ENCODE measurements at regions of chr14 and their contacts with region 1.

Region 1: DNA sequence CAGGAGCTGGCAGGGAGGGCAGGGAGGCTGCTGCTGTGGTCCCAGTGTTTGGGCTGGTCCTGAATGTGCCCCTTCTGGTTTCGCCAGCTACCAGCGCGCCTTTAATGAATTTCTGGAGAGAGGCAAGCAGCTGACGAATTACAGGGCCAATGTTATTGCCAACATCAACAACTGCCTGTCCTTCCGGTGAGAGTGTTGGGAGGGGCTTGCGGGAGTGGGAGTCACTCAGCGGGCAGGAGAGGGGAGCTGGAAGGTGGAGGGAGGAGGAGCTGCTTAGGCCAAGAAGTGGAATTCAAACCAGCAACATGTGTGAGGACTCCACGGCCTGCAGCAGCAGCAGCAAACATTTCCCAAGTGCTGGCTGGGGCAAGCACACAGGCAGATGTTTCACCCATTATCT is 7.7 kb downstream of the TNFAIP2 start:
- DNase-seq: peak; percentile 89 to 98
- H3K4me3 ChIP-seq: no peak overlapping the region
- H3K27ac ChIP-seq: peak overlapping the region; percentile 86
- H3K4me1 ChIP-seq: peaks cover 89% of the 10 kb centered on the region
- H3K27me3 ChIP-seq: no peaks in the 10 kb centered on the region
- CTCF ChIP-seq: no peak

Region 2: DNA sequence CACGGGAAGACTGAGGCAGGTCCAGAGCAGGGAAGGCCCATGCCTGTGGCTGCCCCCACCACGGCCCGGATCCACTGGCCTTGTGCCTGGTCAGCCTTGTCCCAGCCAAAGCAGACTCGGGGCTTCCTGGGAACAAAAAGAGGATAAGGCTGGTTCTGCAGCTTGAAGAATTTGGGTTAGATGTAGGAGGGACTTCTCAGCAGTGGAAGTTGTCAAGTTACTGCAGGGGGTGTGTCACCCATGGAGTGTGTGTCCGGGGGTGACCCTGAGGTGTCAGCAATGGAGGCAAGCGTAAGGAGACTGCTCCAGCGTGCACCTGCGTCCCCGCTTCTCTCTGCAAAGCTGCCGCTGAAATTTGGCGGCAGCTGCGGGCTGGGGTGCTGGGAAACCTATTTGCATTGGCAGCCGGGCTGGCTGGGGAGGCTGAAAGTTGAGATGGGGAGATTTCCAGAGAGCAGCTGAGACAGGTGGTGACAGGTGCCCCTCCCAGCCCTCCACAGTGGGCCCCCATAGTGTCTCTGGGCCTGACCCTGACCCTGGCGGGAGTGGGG is 20.2 kb before region 1 on chr14:
- CTCF ChIA-PET with region 1: interaction called, 43 read pairs
- POLR2A ChIA-PET with region 1: interaction called, 6 read pairs
- intact Hi-C with region 1: loop called (anchors 1 kb)
- DNase-seq: peak; percentile 93
- H3K4me3 ChIP-seq: peak overlapping the region; percentile 49; the same call in 1 of the 2 replicates
- H3K27ac ChIP-seq: peak overlapping the region; percentile 90
- H3K4me1 ChIP-seq: peaks cover 68% of the 10 kb centered on the region
- H3K27me3 ChIP-seq: no peaks in the 10 kb centered on the region
- CTCF ChIP-seq: no peak

Region 3: DNA sequence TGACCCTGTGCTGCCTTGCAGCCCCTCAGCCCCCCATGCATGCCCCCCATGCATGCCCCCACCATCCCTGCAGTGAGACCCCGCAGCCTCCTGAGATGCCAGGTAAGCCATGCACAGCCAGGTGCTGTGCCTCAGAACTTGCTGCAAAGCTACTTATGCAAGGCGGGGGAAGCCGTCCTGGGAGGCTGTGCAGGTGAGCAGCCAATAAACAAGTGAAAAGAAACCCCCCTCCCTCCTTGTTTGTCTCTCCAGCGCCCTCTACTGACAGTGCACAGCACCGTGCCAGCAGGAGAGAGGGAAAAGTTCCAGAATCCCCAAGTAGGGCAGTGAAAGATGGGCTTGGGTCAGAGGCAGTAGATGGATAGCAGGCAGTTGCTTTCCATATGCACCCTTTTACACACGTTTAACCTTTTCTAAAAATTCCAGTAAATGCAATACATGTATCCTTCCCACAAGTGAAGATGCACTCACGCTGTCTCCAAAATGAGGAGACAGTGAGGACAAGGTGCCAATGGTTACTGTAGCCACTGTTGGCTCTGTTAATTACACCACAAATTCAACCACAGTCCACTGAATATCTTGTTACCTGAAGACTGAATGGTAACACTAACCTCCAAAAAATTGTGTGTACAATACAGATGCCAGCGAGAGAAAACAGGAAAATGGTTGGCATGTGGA is 10.3 kb after region 1 on chr14:
- CTCF ChIA-PET with region 1: interaction called, 6 read pairs
- POLR2A ChIA-PET with region 1: interaction called, 10 read pairs
- intact Hi-C with region 1: loop called (anchors 1 kb)
- DNase-seq: peak; percentile 78 to 84
- H3K4me3 ChIP-seq: no peak overlapping the region
- H3K27ac ChIP-seq: 0 out of 2 replicates have a peak overlapping the region, but pooled peaks have one; percentile 30
- H3K4me1 ChIP-seq: peaks cover 59% of the 10 kb centered on the region
- H3K27me3 ChIP-seq: no peaks in the 10 kb centered on the region
- CTCF ChIP-seq: peak; percentile 99

Region 4: DNA sequence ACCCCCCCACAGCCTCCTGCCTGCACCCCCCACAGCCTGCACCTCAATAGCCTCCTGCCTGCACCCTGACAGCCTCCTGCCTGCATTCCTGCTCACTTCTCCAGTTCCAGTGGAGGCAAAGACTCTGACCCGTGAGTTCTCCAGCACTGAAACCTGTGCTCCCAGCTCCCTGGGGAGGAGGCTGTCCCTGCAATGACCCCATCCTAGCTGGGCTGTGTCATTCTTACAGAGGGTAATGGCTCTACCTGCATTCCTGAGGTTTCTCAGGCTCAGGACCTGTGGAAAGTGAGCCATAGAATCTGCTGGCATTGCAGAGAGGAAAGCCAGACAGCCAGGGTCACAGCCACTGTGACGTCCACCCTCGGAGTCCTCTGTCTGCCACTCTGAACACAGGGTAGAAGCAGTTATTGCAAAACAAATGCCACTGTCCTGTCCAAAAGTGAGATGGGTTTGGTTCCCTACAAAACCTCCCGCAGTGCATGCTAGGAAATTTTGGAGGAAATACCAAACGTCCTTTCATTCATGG is 30.0 kb after region 1 on chr14:
- CTCF ChIA-PET with region 1: interaction called, 4 read pairs
- POLR2A ChIA-PET with region 1: interaction called, 16 read pairs
- intact Hi-C with region 1: loop called (anchors 2 kb)
- DNase-seq: peak; percentile 95 to 100
- H3K4me3 ChIP-seq: no peak overlapping the region
- H3K27ac ChIP-seq: peak overlapping the region; percentile 89
- H3K4me1 ChIP-seq: peaks cover 68% of the 10 kb centered on the region
- H3K27me3 ChIP-seq: no peaks in the 10 kb centered on the region
- CTCF ChIP-seq: no peak

Region 5: DNA sequence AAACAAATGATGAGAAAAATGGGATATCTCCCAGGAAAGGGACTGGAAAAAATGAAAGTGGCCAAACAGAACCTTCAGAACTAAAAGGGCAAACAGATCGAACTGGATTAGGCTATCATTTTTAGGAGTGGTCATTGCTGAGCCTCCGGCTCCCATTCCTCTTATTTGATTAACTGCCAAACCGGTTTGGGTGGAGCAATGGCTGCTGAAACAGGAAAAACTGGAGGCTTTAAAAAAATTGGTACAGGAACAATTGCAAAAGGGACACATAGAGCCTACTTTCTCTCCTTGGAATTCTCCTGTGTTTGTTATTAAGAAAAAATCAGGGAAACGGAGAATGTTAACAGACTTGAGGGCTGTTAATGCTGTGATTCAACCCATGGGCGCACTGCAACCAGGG is 42.0 kb after region 1 on chr14:
- CTCF ChIA-PET with region 1: no interaction called
- POLR2A ChIA-PET with region 1: no interaction called
- intact Hi-C with region 1: loop called (anchors 1 kb)
- DNase-seq: peak; percentile 67 to 94
- H3K4me3 ChIP-seq: peak overlapping the region; percentile 15; the same call in 1 of the 2 replicates
- H3K27ac ChIP-seq: peak overlapping the region; percentile 65
- H3K4me1 ChIP-seq: peaks cover 34% of the 10 kb centered on the region
- H3K27me3 ChIP-seq: no peaks in the 10 kb centered on the region
- CTCF ChIP-seq: no peak

Region 6: GRCh38 chr14:103185051-103185992 is 54.4 kb after region 1 on chr14:
- CTCF ChIA-PET with region 1: interaction called, 3 read pairs
- POLR2A ChIA-PET with region 1: no interaction called
- intact Hi-C with region 1: loop called (anchors 1 kb)
- DNase-seq: peak; percentile 49 to 96
- H3K4me3 ChIP-seq: peak overlapping the region; percentile 14; the same call in 1 of the 2 replicates
- H3K27ac ChIP-seq: peak overlapping the region; percentile 92
- H3K4me1 ChIP-seq: peaks cover 37% of the 10 kb centered on the region
- H3K27me3 ChIP-seq: no peaks in the 10 kb centered on the region
- CTCF ChIP-seq: peak; percentile 100

Region 7: DNA sequence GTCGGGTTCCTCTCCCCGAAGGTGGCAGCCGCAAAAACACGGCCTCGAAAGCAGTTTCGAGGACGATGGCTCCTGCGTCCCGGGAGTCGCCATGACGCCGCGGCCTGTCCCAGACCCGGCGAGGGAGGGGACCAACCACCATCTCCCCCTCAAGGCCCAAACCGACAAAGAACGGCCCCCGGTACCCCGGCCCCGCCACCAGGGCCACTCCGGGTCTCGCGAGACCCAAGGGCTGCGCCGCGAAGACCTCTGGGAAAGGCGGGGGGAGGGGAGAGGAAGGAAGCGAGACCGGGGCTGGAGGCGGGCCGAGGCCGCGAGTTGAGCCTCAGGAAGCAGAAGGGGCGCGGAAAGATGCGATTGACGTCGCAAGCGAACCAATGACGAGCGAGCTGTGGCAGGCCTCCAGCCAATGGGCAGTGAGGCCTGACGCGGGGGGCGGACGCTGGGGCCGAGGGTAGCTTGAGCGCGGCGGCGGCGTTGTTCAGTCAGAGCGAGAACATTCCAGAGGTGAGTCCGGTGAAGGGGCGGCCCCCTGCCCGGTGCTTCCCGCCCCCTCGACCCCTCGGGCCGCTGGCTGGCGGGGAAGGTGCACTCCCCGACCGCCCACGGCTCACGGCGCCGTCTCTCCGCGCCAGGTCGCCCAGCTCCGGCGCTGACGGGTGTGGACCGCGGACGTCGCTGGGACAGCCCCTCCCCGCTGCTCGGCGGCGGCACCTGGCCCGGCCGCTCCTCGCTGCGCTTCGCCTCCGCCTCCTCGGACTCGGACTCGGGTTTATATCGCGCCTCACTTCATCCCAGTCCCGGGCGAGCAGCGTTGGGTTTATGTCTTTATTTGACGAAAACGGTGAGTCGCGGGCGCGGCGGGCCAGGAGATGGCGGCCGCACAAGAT is 203.0 kb after region 1 on chr14 and contains the start of gene EIF5:
- CTCF ChIA-PET with region 1: no interaction called
- POLR2A ChIA-PET with region 1: interaction called, 9 read pairs
- intact Hi-C with region 1: loop called (anchors 2 kb)
- DNase-seq: peak; percentile 98 to 100
- H3K4me3 ChIP-seq: peak within 1 kb of the TSS; percentile 88
- H3K27ac ChIP-seq: peak within 1 kb of the TSS; percentile 94
- H3K4me1 ChIP-seq: peaks cover 42% of the 10 kb centered on the region
- H3K27me3 ChIP-seq: no peaks in the 10 kb centered on the region
- CTCF ChIP-seq: no peak
- total RNA-seq, gene EIF5: 310 and 330 TPM in 2 replicates